Lower leg skin (tissue), 4 donors: ENCODE measurements at regions of chr12 and their contacts with region 1.

Region 1: GRCh38 chr12:95440401-95440800 is 33.6 kb upstream of the METAP2 start:
- DNase-seq: no peak
- H3K4me3 ChIP-seq: no peak overlapping the region
- CTCF ChIP-seq: no peak
- POLR2A ChIP-seq: no peak

Region 2: GRCh38 chr12:94469522-94469921 is 970.9 kb before region 1 on chr12:
- intact Hi-C with region 1: loop called (anchors 5 kb)
- DNase-seq: no peak
- H3K4me3 ChIP-seq: no peak overlapping the region
- CTCF ChIP-seq: no peak
- POLR2A ChIP-seq: no peak

Region 3: DNA sequence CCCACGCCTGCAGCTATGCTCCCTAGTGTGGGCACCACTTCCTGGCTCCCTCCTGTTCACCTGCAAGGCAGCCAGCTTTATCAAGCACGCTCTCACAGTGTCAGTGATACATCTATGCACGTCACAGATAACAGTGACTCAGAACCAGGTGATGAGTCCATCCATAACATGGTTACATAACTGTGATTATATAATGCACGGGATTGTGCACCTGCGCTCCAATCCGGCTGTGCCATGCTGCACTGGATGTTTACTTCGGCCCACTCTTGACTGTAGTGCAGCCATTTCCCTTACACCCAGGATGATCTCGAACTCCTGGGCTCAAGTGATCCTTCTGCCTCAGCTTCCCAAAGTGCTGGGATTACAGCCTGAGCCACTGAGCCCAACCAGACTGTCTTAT is 942.3 kb before region 1 on chr12:
- intact Hi-C with region 1: no loop called
- DNase-seq: no peak
- H3K4me3 ChIP-seq: no peak overlapping the region
- CTCF ChIP-seq: no peak
- POLR2A ChIP-seq: no peak

Region 4: DNA sequence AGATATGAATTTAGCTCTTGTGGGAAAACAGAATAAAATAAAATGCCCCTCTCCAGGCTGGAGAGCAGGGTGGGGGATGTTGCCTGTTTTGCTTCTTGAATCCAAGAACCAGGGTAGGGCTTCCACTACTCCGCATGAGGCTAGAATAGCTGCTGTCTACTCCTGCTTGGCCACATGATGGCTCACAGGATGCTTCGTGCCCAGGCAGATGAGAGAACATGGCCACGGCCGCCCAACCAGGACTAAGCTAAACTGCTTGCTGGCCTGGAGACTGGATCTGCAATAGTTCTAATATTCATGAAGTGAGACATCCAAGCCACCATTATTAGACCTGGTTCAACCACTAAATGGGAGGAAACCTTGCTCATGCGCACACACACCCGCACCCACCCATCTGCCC is 88.7 kb before region 1 on chr12:
- intact Hi-C with region 1: no loop called
- DNase-seq: no peak
- H3K4me3 ChIP-seq: no peak overlapping the region
- CTCF ChIP-seq: no peak
- POLR2A ChIP-seq: no peak

Region 5: GRCh38 chr12:95393191-95393790 is 47.1 kb before region 1 on chr12:
- intact Hi-C with region 1: loop called (anchors 1 kb)
- DNase-seq: no peak
- H3K4me3 ChIP-seq: no peak overlapping the region
- CTCF ChIP-seq: no peak
- POLR2A ChIP-seq: no peak

Region 6: GRCh38 chr12:95413576-95413975 is 26.8 kb before region 1 on chr12:
- intact Hi-C with region 1: no loop called
- DNase-seq: no peak
- H3K4me3 ChIP-seq: no peak overlapping the region
- CTCF ChIP-seq: no peak
- POLR2A ChIP-seq: no peak

Region 7: GRCh38 chr12:95460896-95461661 is 20.7 kb after region 1 on chr12:
- intact Hi-C with region 1: no loop called
- DNase-seq: no peak
- H3K4me3 ChIP-seq: no peak overlapping the region
- CTCF ChIP-seq: no peak
- POLR2A ChIP-seq: no peak